GM23248 (cell line): ENCODE measurements at regions of chr5 and their contacts with region 1.

Region 1: DNA sequence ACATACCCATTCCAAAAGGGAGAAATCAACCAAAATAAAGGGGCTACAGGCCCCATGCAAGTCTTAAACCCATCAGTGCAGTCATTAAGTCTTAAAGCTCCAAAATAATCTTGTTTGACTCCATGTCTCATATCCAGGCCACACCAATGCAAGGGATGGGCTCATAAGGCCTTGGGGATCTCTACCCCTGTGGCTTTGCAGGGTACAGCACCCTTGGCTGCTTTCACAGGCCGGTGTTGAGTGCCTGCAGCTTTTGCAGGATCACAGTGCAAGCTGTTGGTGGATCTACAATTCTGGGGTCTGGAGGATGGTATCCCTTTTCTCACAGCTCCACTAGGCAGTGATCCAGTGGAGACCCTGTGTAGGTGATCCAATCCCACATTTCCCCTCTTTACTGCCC is 5.0 kb upstream of the SPINK14 start:
- DNase-seq: no peak
- H3K4me3 ChIP-seq: no peak overlapping the region
- H3K27ac ChIP-seq: no peak overlapping the region
- H3K4me1 ChIP-seq: no peaks in the 10 kb centered on the region
- H3K27me3 ChIP-seq: no peaks in the 10 kb centered on the region

Region 2: GRCh38 chr5:148474025-148474511 is 310.7 kb after region 1 on chr5:
- in situ Hi-C with region 1: loop called (anchors 10 kb)
- DNase-seq: no peak
- H3K4me3 ChIP-seq: no peak overlapping the region
- H3K27ac ChIP-seq: no peak overlapping the region
- H3K4me1 ChIP-seq: no peaks in the 10 kb centered on the region
- H3K27me3 ChIP-seq: peaks cover 25% of the 10 kb centered on the region